Activated CD8-positive, alpha-beta memory T cell treated with anti-CD3 and anti-CD28 coated beads, Interleukin-2, amount 10 ng/mL, durations not matched to agents 7 days and 5 days (primary cell): ENCODE measurements at regions of chr4 and their contacts with region 1.

Region 1: DNA sequence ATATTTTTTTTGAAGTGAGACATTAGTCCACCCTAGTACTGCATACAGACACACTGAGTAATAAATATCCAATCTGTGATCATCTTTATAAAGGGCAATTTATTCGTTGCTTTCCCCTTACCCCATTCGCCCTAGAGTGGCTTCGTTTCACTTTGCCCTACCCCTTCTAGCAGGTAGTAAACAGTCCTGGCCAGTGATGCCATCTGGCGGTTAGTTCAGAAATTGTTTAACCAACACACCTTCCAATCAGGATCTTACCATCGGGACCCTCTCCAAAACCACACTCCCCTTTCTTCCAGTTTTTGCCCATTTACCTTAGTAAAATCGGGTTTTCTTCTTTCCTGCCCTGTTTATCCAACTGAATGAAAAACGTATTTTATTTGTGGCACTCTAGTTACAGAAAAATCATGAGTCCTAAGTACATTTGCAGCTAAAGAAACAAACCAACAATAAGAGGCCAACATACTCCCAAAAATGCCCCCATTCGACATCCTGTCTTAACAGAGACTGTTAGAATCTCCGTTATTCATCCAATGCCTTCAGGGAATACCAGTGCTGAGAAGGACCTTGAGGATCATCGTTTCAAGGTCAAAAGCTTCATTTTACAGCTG is 2.2 kb downstream of the PPA2 start:
- DNase-seq: peak; percentile 84
- ATAC-seq: peak; percentile 42
- H3K4me3 Mint-ChIP-seq: peak overlapping the region; percentile 60
- H3K27ac Mint-ChIP-seq: peak overlapping the region; percentile 67
- H3K4me1 Mint-ChIP-seq: peaks cover 35% of the 10 kb centered on the region
- H3K27me3 Mint-ChIP-seq: no peaks in the 10 kb centered on the region

Region 2: DNA sequence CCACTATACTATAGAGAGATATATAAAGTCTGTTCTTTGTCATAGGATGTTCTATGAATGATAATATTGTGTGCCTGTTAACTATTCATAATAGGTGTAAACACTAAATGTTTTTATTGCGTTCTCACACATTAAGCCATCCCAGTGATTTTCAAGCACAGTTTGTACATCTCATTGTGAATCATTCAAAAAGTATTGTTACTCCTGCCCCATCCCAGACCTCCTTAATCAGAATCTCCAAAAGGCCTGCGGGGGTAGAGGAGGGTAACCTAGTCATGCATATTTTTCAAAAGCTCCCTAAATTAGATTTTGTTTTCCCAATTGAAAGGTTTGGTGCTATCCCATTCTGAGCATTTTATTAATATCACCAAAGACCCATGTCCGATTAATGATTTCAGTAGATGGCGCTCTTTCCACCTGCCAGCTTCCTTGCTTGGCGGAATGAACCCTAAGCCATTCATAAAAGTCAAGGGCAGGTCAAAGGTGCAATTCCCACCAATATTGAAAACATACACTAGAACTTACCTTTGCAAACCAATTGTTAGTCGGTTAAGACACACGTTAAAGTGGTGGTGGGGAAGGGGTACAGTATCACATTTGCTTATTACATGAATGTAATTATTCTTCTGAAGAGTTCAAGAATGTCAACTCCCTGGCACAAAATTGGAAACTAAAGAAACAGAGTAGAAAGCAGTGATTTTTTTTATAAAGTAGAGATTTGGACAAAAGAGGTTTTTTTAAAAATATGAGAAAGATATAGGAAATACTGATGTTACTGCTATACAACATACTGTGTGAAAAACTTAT is 330.8 kb before region 1 on chr4:
- CTCF ChIA-PET with region 1: interaction called, 24 read pairs
- DNase-seq: peak; percentile 50
- ATAC-seq: peak; percentile 54
- H3K4me3 Mint-ChIP-seq: no peak overlapping the region
- H3K27ac Mint-ChIP-seq: no peak overlapping the region
- H3K4me1 Mint-ChIP-seq: peaks cover 14% of the 10 kb centered on the region
- H3K27me3 Mint-ChIP-seq: no peaks in the 10 kb centered on the region

Region 3: GRCh38 chr4:105146276-105147015 is 325.2 kb before region 1 on chr4 and contains the start of gene TET2:
- CTCF ChIA-PET with region 1: interaction called, 24 read pairs
- DNase-seq: peak; percentile 88
- ATAC-seq: peak; percentile 91
- H3K4me3 Mint-ChIP-seq: peak within 1 kb of the TSS; percentile 99
- H3K27ac Mint-ChIP-seq: peak within 1 kb of the TSS; percentile 99
- H3K4me1 Mint-ChIP-seq: peaks cover 27% of the 10 kb centered on the region
- H3K27me3 Mint-ChIP-seq: no peaks in the 10 kb centered on the region
- total RNA-seq, gene TET2: 24.6 to 25.1 TPM

Region 4: GRCh38 chr4:105461221-105461620 is 10.4 kb before region 1 on chr4:
- CTCF ChIA-PET with region 1: interaction called, 10 read pairs
- DNase-seq: no peak
- ATAC-seq: no peak
- H3K4me3 Mint-ChIP-seq: no peak overlapping the region
- H3K27ac Mint-ChIP-seq: no peak overlapping the region
- H3K4me1 Mint-ChIP-seq: peaks cover 13% of the 10 kb centered on the region
- H3K27me3 Mint-ChIP-seq: no peaks in the 10 kb centered on the region

Region 5: DNA sequence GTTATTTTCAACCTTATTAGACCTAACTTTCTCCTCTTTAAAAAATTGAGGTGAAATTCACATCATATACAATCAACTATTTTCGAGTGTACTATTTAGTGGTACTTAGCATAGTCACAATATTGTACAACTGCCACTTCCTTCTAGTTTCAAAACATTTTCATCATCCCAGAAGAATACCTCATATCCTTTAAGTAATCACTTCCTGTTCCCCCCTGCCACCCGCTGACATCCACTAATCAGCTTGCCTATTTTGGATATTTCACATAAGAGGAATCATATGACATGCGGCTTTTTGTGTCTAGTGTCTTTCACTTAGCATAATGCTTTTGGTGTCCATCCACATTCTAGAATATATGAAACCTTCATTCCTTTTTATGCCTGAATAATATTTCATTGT is 12.2 kb after region 1 on chr4:
- CTCF ChIA-PET with region 1: interaction called, 12 read pairs
- DNase-seq: no peak
- ATAC-seq: no peak
- H3K4me3 Mint-ChIP-seq: no peak overlapping the region
- H3K27ac Mint-ChIP-seq: no peak overlapping the region
- H3K4me1 Mint-ChIP-seq: no peaks in the 10 kb centered on the region
- H3K27me3 Mint-ChIP-seq: peaks cover 6% of the 10 kb centered on the region